ENCODE measurements at regions of chr11 and their contacts with region 1.

Region 1: GRCh38 chr11:12888525-12889158 is 120.5 kb upstream of the RASSF10 start:
- DNase-seq: peak; percentile 82
- ATAC-seq: peak; percentile 88
- H3K4me3 ChIP-seq: no peak overlapping the region
- H3K27ac ChIP-seq: no peak overlapping the region
- H3K4me1 ChIP-seq: 0 out of 2 replicates have a peak, but pooled peaks cover 4% of the 10 kb centered on the region
- H3K27me3 ChIP-seq: no peaks in the 10 kb centered on the region
- CTCF ChIP-seq: peak; percentile 87

Region 2: DNA sequence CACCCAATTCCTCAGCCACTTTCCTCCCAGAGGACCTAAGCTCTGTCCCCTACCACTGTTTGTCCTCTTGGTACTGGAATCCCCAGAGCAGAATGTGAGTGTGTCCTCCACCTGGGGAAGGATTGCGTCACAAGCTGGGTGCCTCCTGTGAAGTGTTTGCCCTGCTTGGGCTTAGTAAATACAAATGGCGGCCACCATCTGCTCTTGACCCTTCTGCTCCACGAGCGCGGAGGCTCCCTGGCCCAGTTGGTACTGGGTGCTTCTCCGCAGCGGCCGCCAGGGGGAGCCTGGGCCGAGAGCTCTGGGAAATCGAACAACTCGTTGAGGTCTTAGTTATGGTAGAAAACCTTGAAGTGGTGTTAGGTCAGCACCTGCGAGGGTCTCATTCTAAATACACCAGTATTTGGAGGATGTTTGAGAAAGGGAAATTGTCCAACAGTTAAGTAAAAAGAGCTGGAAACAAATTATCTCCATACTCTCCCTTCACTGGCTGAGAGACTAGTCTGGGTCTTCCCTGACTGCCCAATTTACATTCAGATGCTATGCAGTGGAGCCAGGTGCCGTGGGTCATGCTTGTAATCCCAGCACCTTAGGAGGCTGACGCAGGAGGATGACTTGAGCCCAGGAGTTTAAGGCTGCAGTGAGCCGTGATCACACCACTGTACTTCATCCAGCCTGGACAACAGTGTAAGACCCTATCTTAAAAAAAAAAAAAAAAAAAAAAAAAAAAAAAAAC is 289.1 kb before region 1 on chr11:
- CTCF ChIA-PET with region 1: interaction called, 5 read pairs
- POLR2A ChIA-PET with region 1: interaction called, 3 read pairs
- intact Hi-C with region 1: loop called (anchors 2 kb)
- DNase-seq: peak; percentile 42
- ATAC-seq: peak; percentile 48
- H3K4me3 ChIP-seq: no peak overlapping the region
- H3K27ac ChIP-seq: no peak overlapping the region
- H3K4me1 ChIP-seq: peaks cover 12% of the 10 kb centered on the region; the same call in 1 of the 2 replicates
- H3K27me3 ChIP-seq: no peaks in the 10 kb centered on the region
- CTCF ChIP-seq: peak; percentile 88

Region 3: DNA sequence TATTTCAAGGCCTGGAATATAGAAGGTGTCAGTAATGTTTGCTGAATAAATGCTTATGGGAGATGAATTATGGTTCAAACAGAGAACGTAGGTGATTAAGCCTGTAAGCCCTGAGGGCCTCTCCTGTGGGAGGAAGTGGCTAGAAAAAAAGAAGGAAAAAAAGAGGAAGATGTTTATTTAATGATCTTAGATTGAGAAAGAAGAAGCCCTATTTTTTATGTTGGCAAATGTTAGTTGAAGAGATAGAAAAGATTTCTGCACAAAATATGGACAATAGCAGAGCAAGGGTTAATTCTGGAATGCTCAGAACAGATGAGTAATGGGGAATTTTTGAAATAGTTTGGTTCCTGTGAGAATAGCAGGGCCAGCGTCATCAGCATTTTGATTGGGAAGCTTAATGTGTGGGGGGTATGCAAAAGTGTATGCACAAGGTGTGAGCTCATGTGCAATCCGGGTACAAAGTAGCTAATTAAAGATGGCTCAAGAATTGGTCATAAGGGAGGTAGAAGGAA is 118.8 kb before region 1 on chr11:
- CTCF ChIA-PET with region 1: no interaction called
- POLR2A ChIA-PET with region 1: no interaction called
- intact Hi-C with region 1: loop called (anchors 5 kb)
- DNase-seq: peak; percentile 82
- ATAC-seq: peak; percentile 83
- H3K4me3 ChIP-seq: peak overlapping the region; percentile 5; the same call in 1 of the 2 replicates
- H3K27ac ChIP-seq: peak overlapping the region; percentile 87
- H3K4me1 ChIP-seq: peaks cover 42% of the 10 kb centered on the region
- H3K27me3 ChIP-seq: no peaks in the 10 kb centered on the region
- CTCF ChIP-seq: no peak

Region 4: DNA sequence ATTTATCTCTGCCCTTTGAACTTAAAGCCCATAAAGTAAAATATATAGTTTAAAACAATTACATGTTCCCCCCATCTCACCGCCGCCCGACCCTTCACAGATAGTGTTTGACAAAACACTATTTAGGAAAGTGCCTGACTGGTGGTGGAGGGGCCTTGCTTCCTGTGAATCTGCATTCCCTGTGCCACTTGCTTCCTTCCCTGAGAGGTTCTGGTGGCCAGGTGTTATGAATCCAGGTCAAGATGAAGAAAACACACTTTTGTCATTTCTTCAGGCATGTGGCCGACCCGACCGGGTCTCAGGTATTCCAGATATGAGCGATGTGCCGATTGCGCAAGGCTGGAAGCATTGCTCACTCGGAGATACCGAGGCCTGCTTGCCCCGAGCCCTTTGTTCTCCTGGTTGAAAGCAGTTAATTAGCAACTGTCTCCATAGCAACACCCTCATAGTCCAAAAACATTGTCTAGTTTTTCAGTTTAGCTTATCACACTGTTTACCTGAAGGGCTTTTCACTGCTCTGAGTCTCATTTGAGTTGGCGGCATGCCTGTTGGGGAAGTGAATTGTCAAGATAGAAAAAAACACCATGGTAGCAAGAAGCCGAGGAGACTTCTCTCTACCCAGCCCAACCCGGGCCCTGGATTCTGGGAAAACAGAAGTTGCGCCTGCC is 86.1 kb before region 1 on chr11:
- CTCF ChIA-PET with region 1: no interaction called
- POLR2A ChIA-PET with region 1: no interaction called
- intact Hi-C with region 1: loop called (anchors 5 kb)
- DNase-seq: peak; percentile 95
- ATAC-seq: peak; percentile 66
- H3K4me3 ChIP-seq: peak overlapping the region; percentile 40
- H3K27ac ChIP-seq: peak overlapping the region; percentile 93
- H3K4me1 ChIP-seq: peaks cover 60% of the 10 kb centered on the region
- H3K27me3 ChIP-seq: no peaks in the 10 kb centered on the region
- CTCF ChIP-seq: no peak

Region 5: GRCh38 chr11:12914400-12914912 is 25.8 kb after region 1 on chr11:
- CTCF ChIA-PET with region 1: interaction called, 12 read pairs
- POLR2A ChIA-PET with region 1: no interaction called
- intact Hi-C with region 1: no loop called
- DNase-seq: peak; percentile 30
- ATAC-seq: peak; percentile 68
- H3K4me3 ChIP-seq: no peak overlapping the region
- H3K27ac ChIP-seq: no peak overlapping the region
- H3K4me1 ChIP-seq: no peaks in the 10 kb centered on the region
- H3K27me3 ChIP-seq: no peaks in the 10 kb centered on the region
- CTCF ChIP-seq: peak; percentile 73